Activated CD8-positive, alpha-beta memory T cell treated with anti-CD3 and anti-CD28 coated beads, Interleukin-2, amount 10 ng/mL, durations not matched to agents 7 days and 5 days (primary cell): ENCODE measurements at regions of chr5 and their contacts with region 1.

Region 1: GRCh38 chr5:112995764-112996618 is 19.4 kb downstream of the DCP2 start:
- DNase-seq: peak; percentile 83
- ATAC-seq: peak; percentile 78
- H3K4me3 Mint-ChIP-seq: no peak overlapping the region
- H3K27ac Mint-ChIP-seq: no peak overlapping the region
- H3K4me1 Mint-ChIP-seq: peaks cover 14% of the 10 kb centered on the region
- H3K27me3 Mint-ChIP-seq: no peaks in the 10 kb centered on the region

Region 2: DNA sequence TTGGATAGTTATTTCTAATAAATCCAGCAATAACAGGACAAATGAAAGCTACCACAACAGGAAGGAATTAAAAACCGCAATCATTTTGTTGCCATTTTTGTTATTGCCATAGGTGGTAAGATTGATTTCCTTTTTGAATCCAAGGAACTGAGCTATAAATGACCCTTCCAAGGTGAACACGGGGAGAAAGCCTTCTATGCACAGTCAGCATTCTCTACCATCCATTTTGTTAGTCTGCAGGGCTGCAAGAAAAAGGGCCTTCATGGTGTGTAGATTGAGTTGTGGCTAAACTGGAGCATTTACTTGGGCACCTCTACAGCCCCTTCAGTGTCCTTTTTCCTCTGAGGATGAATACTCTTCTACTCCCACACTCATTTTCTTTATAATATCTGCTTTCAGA is 55.3 kb before region 1 on chr5:
- CTCF ChIA-PET with region 1: no interaction called
- DNase-seq: no peak
- ATAC-seq: no peak
- H3K4me3 Mint-ChIP-seq: no peak overlapping the region
- H3K27ac Mint-ChIP-seq: no peak overlapping the region
- H3K4me1 Mint-ChIP-seq: no peaks in the 10 kb centered on the region
- H3K27me3 Mint-ChIP-seq: peaks cover 10% of the 10 kb centered on the region

Region 3: DNA sequence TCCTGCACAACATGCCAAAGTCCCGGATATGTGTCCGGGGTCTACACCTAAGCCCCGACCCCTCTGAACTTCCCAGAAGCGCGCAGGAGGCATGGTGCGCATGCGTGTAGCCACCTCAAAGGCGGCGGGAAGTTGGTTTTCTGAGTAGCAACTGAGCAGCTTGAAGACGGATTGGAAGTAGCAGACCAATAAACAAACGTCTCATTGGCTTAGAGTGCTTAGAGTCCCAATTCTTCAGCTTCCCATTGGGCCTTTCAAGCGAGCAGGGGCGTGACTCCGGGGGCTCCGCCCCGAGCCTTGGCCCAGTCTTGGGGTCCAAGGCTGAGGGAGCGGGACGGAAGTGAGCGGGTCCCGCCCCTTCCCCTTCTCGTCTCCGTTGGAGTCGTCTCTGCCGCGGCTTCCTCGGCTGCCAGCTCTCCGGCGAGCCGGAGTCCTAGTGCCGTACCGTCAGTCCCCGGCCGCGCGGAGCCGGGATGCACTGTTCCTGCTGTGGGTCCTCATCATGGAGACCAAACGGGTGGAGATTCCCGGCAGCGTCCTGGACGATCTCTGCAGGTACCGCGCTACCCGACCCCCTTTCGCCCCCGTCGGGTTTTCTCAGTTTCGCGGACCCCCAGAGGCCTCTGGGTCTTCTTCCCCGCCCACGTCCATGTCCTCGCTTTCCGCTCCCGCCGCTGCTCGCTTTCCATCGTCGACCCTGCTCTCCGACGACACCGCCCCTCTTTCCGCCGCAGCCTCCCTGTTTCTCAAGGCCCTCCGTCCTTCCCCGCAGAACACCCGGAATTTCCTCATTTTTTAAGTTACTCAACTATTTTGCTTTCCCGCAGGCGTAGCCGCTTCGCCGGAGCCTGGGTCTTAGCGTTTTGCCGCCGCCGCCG is 19.3 kb before region 1 on chr5 and contains the start of gene DCP2:
- CTCF ChIA-PET with region 1: interaction called, 12 read pairs
- DNase-seq: peak; percentile 98
- ATAC-seq: peak; percentile 98
- H3K4me3 Mint-ChIP-seq: peak within 1 kb of the TSS; percentile 96
- H3K27ac Mint-ChIP-seq: peak within 1 kb of the TSS; percentile 99
- H3K4me1 Mint-ChIP-seq: peaks cover 43% of the 10 kb centered on the region
- H3K27me3 Mint-ChIP-seq: no peaks in the 10 kb centered on the region
- total RNA-seq, gene DCP2: 90.4 to 108 TPM

Region 4: DNA sequence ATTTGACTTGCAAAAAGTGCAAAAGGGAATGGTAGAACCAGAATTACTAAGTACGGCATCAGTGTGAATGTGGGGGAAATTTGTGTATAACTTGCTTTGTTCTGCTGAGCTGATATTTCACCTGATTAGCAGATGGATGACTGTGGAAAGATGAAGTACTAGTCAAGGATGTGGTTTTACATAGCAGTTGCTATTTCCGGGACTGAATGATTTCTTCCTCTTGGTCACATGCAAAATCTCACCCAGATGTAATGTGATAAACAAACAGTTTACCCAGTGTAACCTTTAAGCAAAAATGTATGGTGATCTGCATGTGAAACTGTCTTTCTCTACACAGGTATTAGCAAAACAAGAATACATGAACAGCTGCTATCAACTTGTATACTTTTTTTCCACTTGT is 26.7 kb after region 1 on chr5:
- CTCF ChIA-PET with region 1: interaction called, 11 read pairs
- DNase-seq: no peak
- ATAC-seq: peak; percentile 85
- H3K4me3 Mint-ChIP-seq: no peak overlapping the region
- H3K27ac Mint-ChIP-seq: peak overlapping the region; percentile 76
- H3K4me1 Mint-ChIP-seq: peaks cover 56% of the 10 kb centered on the region
- H3K27me3 Mint-ChIP-seq: no peaks in the 10 kb centered on the region

Region 5: GRCh38 chr5:113204525-113205161 is 208.7 kb after region 1 on chr5:
- CTCF ChIA-PET with region 1: no interaction called
- DNase-seq: no peak
- ATAC-seq: no peak
- H3K4me3 Mint-ChIP-seq: no peak overlapping the region
- H3K27ac Mint-ChIP-seq: no peak overlapping the region
- H3K4me1 Mint-ChIP-seq: no peaks in the 10 kb centered on the region
- H3K27me3 Mint-ChIP-seq: no peaks in the 10 kb centered on the region

Region 6: GRCh38 chr5:113330533-113331208 is 334.7 kb after region 1 on chr5:
- CTCF ChIA-PET with region 1: interaction called, 34 read pairs
- DNase-seq: no peak
- ATAC-seq: peak; percentile 79
- H3K4me3 Mint-ChIP-seq: no peak overlapping the region
- H3K27ac Mint-ChIP-seq: peak overlapping the region; percentile 19
- H3K4me1 Mint-ChIP-seq: peaks cover 18% of the 10 kb centered on the region
- H3K27me3 Mint-ChIP-seq: peaks cover 4% of the 10 kb centered on the region

Region 7: DNA sequence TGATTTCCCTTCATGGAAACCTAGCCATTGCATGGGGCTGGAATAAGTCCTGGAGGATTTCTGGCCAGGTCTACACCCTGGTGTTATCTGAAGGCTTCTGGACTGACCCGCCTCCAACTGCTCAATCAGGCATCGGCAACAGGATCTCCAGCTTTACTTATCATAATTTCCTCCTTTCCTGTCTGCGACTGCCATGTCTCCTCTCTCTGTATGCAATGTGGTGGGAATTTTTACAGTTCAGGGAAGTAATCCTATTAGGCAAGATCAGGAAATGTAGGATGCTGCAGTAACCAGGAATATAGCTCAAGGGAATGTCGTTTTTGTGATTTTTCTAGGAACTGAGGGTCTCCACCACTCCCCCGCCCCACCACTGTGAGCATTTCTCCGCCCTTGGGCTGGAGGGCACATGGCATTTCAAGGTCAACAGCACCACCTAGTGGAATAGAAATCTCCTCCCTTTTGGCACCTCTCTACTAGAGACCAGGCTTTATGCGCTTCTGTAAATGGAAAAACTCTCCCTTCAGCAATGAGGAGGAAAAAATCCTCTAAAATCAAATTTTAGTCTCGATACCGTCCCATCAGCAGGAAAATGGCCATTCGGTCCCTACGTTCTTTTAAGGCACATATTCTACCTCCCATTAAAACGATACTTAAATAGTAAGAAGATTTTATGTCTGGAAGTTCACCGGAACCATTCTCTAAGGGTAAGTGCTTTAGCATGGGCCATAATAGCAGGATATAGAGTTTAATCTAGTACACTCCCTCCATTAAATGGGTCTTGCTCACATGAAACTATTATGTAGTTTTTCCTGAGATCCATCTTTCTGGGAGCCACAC is 610.5 kb after region 1 on chr5:
- CTCF ChIA-PET with region 1: interaction called, 20 read pairs
- DNase-seq: peak; percentile 56
- ATAC-seq: peak; percentile 83
- H3K4me3 Mint-ChIP-seq: no peak overlapping the region
- H3K27ac Mint-ChIP-seq: no peak overlapping the region
- H3K4me1 Mint-ChIP-seq: peaks cover 14% of the 10 kb centered on the region
- H3K27me3 Mint-ChIP-seq: peaks cover 36% of the 10 kb centered on the region